Thyroid gland (tissue), 4 donors: ENCODE measurements at regions of chr9 and their contacts with region 1.

Region 1: GRCh38 chr9:35553670-35554543 is 51.2 kb upstream of the TESK1 start:
- DNase-seq: peak; percentile 69 to 78
- H3K4me3 ChIP-seq: no peak overlapping the region
- H3K27ac ChIP-seq: peak overlapping the region; percentile 41 to 65 (median 46)
- H3K4me1 ChIP-seq: peaks cover 16 to 34% of the 10 kb centered on the region in 2 donors
- H3K27me3 ChIP-seq: no peaks in the 10 kb centered on the region
- CTCF ChIP-seq: peak; percentile 61 to 96 (median 92)
- POLR2A ChIP-seq: no peak

Region 2: DNA sequence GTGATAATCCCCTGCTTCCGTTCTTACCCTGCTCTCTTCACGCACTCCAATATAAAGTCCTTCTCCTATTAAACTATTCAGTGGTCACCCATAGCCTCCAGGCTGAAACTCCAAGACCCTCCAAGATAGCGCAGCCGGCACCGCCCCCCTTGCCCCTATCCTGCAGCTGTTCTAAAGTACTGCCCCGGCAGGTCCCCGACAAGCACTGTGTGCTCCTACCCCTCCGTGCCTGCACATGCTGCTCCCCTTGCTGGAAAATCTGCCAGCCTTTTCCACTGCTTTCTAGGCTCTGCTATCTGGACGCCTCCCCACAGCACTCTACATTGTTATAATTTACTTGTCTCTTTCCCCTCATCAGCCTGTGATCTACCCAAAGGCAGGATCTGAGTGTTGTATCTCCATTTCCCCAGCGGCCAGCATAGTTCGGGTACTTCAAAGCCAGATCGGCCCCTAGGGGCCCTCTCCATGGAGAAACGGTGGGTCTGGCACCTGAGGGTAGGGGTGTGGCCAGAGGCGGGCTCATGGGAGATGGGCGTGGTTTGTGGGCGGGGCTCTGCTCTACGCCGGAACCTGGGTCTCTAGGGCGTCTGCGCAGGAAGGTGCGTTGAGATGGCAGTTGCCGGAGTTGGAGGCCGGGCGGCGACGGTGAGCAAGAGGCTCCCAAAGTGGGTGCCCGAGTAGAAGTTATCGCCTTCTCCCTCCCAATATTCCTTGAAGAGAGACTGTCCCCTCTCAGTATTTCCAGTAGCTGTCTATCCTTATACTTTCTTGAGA is 147.5 kb before region 1 on chr9:
- intact Hi-C with region 1: no loop called
- DNase-seq: peak; percentile 86 to 88
- H3K4me3 ChIP-seq: peak overlapping the region in 1 of 3 donors; percentile 20
- H3K27ac ChIP-seq: no peak overlapping the region
- H3K4me1 ChIP-seq: no peaks in the 10 kb centered on the region
- H3K27me3 ChIP-seq: no peaks in the 10 kb centered on the region
- CTCF ChIP-seq: peak in 2 of 6 experiments; percentile 21
- POLR2A ChIP-seq: peak in 1 of 2 donors; percentile 76

Region 3: GRCh38 chr9:35489313-35490154 is 64.4 kb before region 1 on chr9 and contains the start of gene RUSC2:
- intact Hi-C with region 1: loop called (anchors 2 kb)
- DNase-seq: peak; percentile 87 to 89
- H3K4me3 ChIP-seq: peak within 1 kb of the TSS; percentile 41 to 76 (median 64)
- H3K27ac ChIP-seq: peak within 1 kb of the TSS; percentile 76 to 97 (median 97)
- H3K4me1 ChIP-seq: peaks cover 8% of the 10 kb centered on the region in 2 donors
- H3K27me3 ChIP-seq: no peaks in the 10 kb centered on the region
- CTCF ChIP-seq: peak in 5 of 6 experiments; percentile 13 to 72 (median 41)
- POLR2A ChIP-seq: peak in 1 of 2 donors; percentile 84
- total RNA-seq, gene RUSC2: 15.2 to 28.2 (median 26.4) TPM